Activated CD4-positive, alpha-beta memory T cell treated with anti-CD3 and anti-CD28 coated beads, Interleukin-2, amount 10 ng/mL, durations not matched to agents 7 days and 5 days (primary cell): ENCODE measurements at regions of chr11 and their contacts with region 1.

Region 1: DNA sequence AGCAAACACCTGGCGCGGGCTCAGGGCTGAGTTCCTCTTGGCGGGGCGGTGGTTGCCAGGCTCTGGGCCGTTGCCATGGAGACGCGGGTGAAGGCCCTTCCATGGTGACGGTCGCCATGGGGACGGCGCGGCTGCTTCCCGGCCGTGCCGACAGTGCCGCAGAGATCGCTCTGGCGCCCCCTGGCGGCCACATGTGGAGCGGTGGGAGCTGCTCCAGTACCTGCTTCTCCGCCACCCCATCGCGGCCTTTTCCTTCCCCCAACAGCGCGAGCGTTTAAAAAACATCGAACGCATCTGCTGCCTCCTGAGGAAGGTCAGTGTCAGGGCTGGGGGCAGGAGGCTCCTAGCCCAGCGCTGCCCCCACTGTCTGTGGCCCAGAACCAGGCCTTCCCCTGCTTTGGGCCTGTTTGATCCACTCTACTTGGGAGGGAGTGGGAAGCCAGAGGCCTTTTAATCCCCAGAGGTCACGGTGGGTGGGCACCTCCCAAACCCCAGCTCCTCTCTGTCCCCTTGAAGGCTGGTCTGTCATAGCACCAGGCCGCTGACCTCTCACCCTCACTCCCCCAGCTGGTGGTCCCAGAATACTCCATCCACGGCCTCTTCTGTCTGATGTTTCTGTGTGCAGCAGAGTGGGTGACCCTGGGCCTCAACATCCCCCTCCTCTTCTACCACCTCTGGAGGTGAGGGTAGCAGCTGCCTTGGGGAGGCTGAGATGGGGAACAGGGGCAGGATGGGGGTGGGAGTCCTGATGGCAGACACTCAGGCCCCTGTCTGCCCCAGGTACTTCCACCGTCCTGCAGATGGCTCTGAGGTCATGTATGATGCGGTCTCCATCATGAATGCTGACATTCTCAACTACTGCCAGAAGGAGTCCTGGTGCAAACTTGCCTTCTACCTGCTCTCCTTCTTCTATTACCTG is 4.8 kb downstream of the CNIH2 start:
- DNase-seq: peak; percentile 99
- H3K4me3 Mint-ChIP-seq: no peak overlapping the region
- H3K27ac Mint-ChIP-seq: peak overlapping the region; percentile 58
- H3K4me1 Mint-ChIP-seq: peaks cover 43% of the 10 kb centered on the region
- H3K27me3 Mint-ChIP-seq: peaks cover 16% of the 10 kb centered on the region

Region 2: GRCh38 chr11:66157179-66157864 is 125.4 kb before region 1 on chr11:
- CTCF ChIA-PET with region 1: no interaction called
- POLR2A ChIA-PET with region 1: no interaction called
- DNase-seq: no peak
- H3K4me3 Mint-ChIP-seq: no peak overlapping the region
- H3K27ac Mint-ChIP-seq: no peak overlapping the region
- H3K4me1 Mint-ChIP-seq: peaks cover 21% of the 10 kb centered on the region
- H3K27me3 Mint-ChIP-seq: no peaks in the 10 kb centered on the region

Region 3: GRCh38 chr11:66268283-66268951 is 14.3 kb before region 1 on chr11 and contains the start of gene RAB1B:
- CTCF ChIA-PET with region 1: interaction called, 44 read pairs
- POLR2A ChIA-PET with region 1: interaction called, 78 read pairs
- DNase-seq: peak; percentile 100
- H3K4me3 Mint-ChIP-seq: peak within 1 kb of the TSS; percentile 98
- H3K27ac Mint-ChIP-seq: peak within 1 kb of the TSS; percentile 91
- H3K4me1 Mint-ChIP-seq: peaks cover 48% of the 10 kb centered on the region
- H3K27me3 Mint-ChIP-seq: no peaks in the 10 kb centered on the region
- total RNA-seq, gene RAB1B: 146 to 150 TPM

Region 4: DNA sequence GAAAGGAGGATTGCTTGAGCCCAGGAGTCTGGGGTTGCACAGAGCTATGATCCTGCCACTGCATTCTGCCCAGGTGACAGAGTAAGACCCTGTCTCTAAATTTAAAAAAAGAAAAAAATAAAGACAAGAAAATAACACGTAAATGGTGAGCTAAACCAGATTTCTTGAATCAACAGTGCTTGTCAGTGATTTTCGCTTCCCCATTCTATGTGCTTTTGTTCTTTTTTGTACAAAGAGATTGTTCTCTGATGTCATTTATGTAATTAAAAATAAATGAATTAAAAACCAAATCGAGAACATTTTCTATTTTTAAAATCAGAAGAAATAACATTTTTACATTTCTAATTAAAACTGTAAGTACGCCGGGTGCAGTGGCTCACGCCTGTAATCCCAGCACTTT is 108.6 kb after region 1 on chr11:
- CTCF ChIA-PET with region 1: no interaction called
- POLR2A ChIA-PET with region 1: no interaction called
- DNase-seq: no peak
- H3K4me3 Mint-ChIP-seq: no peak overlapping the region
- H3K27ac Mint-ChIP-seq: no peak overlapping the region
- H3K4me1 Mint-ChIP-seq: peaks cover 2% of the 10 kb centered on the region
- H3K27me3 Mint-ChIP-seq: peaks cover 7% of the 10 kb centered on the region